H1 (cell line): ENCODE measurements at regions of chr4 and their contacts with region 1.

Region 1: GRCh38 chr4:154049457-154050181 is 260.7 kb upstream of the SFRP2 start:
- DNase-seq: peak; percentile 17 to 65
- H3K4me3 ChIP-seq: no peak overlapping the region
- H3K27ac ChIP-seq: no peak overlapping the region
- H3K4me1 ChIP-seq: no peaks in the 10 kb centered on the region; a peak in 2 of 7 replicates
- H3K27me3 ChIP-seq: no peaks in the 10 kb centered on the region
- CTCF ChIP-seq: peak; percentile 34 to 58 (median 53); a peak in 3 of 4 replicates
- EP300 ChIP-seq: no peak
- POLR2A ChIP-seq: no peak
- RAD21 ChIP-seq: peak; percentile 51 to 57

Region 2: GRCh38 chr4:154073107-154073822 is 23.6 kb after region 1 on chr4:
- CTCF ChIA-PET with region 1: interaction called, 11 read pairs
- POLR2A ChIA-PET with region 1: interaction called, 4 read pairs
- DNase-seq: no peak
- H3K4me3 ChIP-seq: no peak overlapping the region
- H3K27ac ChIP-seq: no peak overlapping the region
- H3K4me1 ChIP-seq: no peaks in the 10 kb centered on the region
- H3K27me3 ChIP-seq: no peaks in the 10 kb centered on the region
- CTCF ChIP-seq: no peak
- EP300 ChIP-seq: no peak
- POLR2A ChIP-seq: no peak
- RAD21 ChIP-seq: no peak

Region 3: DNA sequence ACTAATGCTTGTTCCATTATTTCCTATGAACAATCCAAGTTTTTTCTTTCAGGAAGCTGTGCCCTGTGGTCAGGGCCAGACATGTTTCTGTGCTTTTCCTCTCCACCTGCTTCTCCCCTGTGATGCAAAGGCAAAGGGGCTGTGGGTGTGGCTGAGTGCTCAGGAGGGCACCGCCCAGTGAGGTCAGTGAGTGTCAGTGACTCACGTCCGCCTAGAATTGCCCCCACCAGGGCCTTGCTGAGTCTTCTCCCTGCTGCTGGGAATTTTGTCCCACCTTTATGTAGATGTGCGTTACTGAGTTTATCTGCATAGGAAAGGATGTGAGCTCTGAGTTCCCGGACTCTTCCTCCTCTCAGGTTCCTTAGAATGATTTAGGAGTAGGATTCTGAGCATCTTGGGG is 158.8 kb after region 1 on chr4:
- CTCF ChIA-PET with region 1: no interaction called
- POLR2A ChIA-PET with region 1: no interaction called
- DNase-seq: no peak
- H3K4me3 ChIP-seq: no peak overlapping the region
- H3K27ac ChIP-seq: no peak overlapping the region
- H3K4me1 ChIP-seq: no peaks in the 10 kb centered on the region
- H3K27me3 ChIP-seq: no peaks in the 10 kb centered on the region
- CTCF ChIP-seq: no peak
- EP300 ChIP-seq: no peak
- POLR2A ChIP-seq: no peak
- RAD21 ChIP-seq: no peak